ENCODE measurements at regions of chr1 and their contacts with region 1.

Region 1: DNA sequence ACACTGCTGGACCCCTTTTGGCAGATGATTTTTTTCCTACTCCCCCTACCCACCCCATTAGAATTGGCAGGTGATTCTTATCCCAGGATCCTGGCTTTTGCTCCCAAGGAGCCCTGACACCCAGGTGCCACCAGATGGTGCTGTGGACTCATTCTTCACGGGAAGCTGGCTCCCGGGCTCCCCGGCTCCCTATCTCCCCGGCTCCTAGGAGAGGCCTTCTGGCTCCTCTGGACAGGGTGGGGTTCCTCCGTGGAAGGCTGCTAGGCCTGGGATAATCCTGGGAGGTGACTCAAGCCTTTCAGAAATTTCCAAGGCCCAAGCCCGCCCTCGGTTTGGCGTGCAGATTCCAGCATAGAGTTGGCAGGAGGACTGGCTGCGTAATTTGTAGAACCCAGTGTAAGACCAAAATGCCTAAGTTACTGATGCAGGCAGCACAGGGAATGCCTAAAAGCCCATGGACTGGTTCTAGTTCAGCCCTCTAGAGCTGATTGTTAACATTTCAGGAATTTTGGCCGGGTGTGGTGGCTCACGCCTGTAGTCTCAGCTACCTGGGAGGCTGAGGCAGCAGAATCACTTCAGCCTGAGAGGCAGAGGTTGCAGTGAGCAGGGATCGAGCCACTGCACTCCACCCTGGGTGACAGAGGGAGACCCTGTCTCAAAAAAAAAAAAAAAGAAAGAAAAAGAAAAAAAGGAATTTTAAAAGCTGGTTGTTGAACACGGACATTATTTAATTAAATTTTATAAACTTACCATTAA is 6.8 kb upstream of the BSDC1 start:
- DNase-seq: peak; percentile 85 to 87
- ATAC-seq: peak; percentile 94 to 99 (median 97)
- H3K4me3 ChIP-seq: no peak overlapping the region
- H3K27ac ChIP-seq: peak overlapping the region in 5 of 10 donors; percentile 47 to 70 (median 64)
- H3K4me1 ChIP-seq: peaks cover 0 to 8% (median 0%) of the 10 kb centered on the region in 9 donors
- H3K27me3 ChIP-seq: no peaks in the 10 kb centered on the region
- CTCF ChIP-seq: peak; percentile 85 to 93 (median 90)

Region 2: GRCh38 chr1:32107742-32108661 is 293.1 kb before region 1 on chr1 and contains the start of gene KPNA6:
- intact Hi-C with region 1: no loop called
- DNase-seq: peak; percentile 83 to 96
- ATAC-seq: peak; percentile 89 to 96 (median 92)
- H3K4me3 ChIP-seq: peak within 1 kb of the TSS; percentile 71 to 99 (median 96)
- H3K27ac ChIP-seq: peak within 1 kb of the TSS; percentile 68 to 96 (median 92)
- H3K4me1 ChIP-seq: peaks cover 3 to 53% (median 44%) of the 10 kb centered on the region in 9 donors
- H3K27me3 ChIP-seq: no peaks in the 10 kb centered on the region
- CTCF ChIP-seq: no peak
- total RNA-seq, gene KPNA6: 73.0 to 92.5 (median 82.6) TPM

Region 3: GRCh38 chr1:32413507-32414185 is 12.6 kb after region 1 on chr1:
- intact Hi-C with region 1: loop called in 3 of 10 experiments (anchors 1 to 2 kb)
- DNase-seq: peak; percentile 16 to 76
- ATAC-seq: peak; percentile 61 to 85 (median 77)
- H3K4me3 ChIP-seq: no peak overlapping the region
- H3K27ac ChIP-seq: no peak overlapping the region
- H3K4me1 ChIP-seq: peaks cover 0 to 3% (median 0%) of the 10 kb centered on the region in 9 donors
- H3K27me3 ChIP-seq: peaks cover 0 to 5% (median 0%) of the 10 kb centered on the region in 7 donors
- CTCF ChIP-seq: peak; percentile 57 to 84 (median 79)

Region 4: DNA sequence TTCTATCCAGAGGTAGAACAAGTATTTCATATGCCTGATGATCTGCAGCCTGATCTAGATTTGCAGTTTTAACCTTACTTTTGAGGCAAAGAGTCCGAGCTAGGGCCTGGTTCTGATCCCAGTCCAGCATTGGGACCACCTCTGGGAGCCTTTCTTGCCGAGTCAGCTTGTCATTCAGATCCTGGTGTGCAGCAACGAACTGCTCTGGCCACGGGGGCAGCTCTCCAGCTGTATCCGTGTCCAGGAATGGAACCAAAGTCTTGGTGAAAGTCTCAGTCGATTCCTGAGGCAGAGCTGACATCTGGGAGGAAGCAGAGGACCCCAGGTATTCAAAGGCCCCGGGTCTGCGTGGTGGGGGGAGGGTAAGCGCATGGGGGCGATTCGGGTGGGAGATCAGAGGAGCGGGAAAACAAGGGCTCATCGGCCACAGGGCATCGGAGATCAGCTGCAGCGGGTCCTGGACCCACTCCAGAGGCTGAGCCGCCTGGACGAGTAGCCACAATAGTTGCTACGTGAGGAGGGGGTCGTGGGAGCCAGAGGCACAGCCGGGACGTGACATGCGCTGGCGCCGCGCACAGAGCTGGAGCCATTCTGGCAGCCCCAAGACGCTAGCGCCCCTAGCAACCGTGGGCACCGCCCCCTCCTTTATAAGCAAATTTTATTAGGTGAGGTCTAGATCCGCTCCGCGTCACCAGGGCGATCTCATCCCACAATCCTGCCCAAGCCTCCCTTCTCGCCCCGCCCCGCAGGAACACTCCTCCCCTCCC is 25.6 kb after region 1 on chr1:
- intact Hi-C with region 1: loop called in 1 of 10 experiments (anchors 1 kb)
- DNase-seq: peak in 1 of 2 donors; percentile 6
- ATAC-seq: peak in 2 of 8 donors; percentile 29 to 42
- H3K4me3 ChIP-seq: peak overlapping the region; percentile 1 to 49 (median 36)
- H3K27ac ChIP-seq: no peak overlapping the region
- H3K4me1 ChIP-seq: peaks cover 0 to 9% (median 6%) of the 10 kb centered on the region in 9 donors
- H3K27me3 ChIP-seq: peaks cover 3 to 68% (median 27%) of the 10 kb centered on the region in 7 donors
- CTCF ChIP-seq: no peak

Region 5: DNA sequence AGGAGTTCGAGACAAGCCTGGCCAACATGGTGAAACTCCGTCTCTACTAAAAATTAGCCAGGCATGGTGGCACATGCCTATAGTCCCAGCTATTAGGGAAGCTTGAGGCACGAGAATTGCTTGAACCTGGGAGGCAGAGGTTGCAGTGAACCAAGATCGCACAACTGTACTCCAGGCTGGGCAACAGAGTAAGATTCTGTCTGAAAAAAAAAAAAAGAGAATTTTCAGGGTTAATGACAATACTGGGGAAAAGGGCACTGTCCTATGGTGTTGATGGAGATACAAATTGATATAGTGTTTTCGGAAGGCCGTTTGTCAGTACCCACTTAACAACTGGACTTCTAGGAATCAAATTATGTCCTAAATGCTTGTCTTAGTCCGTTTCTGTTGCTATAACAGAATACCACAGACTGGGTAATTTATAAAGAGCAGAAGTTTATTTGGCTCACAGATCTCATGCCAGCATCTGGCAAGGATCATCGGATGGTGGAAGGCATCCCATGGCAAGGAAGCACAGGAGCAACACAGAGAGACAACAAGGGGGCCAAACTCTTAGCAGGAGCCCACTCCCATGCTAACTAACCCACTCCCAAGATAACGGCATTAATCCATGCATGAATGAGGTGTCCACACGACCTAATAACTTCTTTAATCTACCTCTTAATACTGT is 179.4 kb after region 1 on chr1:
- intact Hi-C with region 1: no loop called
- DNase-seq: no peak
- ATAC-seq: no peak
- H3K4me3 ChIP-seq: no peak overlapping the region
- H3K27ac ChIP-seq: no peak overlapping the region
- H3K4me1 ChIP-seq: no peaks in the 10 kb centered on the region
- H3K27me3 ChIP-seq: no peaks in the 10 kb centered on the region
- CTCF ChIP-seq: no peak

Region 6: GRCh38 chr1:33460947-33461629 is 1060.0 kb after region 1 on chr1:
- intact Hi-C with region 1: no loop called
- DNase-seq: peak; percentile 44 to 77
- ATAC-seq: peak; percentile 61 to 87 (median 75)
- H3K4me3 ChIP-seq: no peak overlapping the region
- H3K27ac ChIP-seq: peak overlapping the region; percentile 59 to 93 (median 84)
- H3K4me1 ChIP-seq: peaks cover 2 to 74% (median 35%) of the 10 kb centered on the region in 9 donors
- H3K27me3 ChIP-seq: no peaks in the 10 kb centered on the region
- CTCF ChIP-seq: no peak